Activated CD4-positive, alpha-beta T cell treated with anti-CD3 and anti-CD28 coated beads, Interleukin-2, amount 10 ng/mL, durations not matched to agents 24 days and 14 days (primary cell): ENCODE measurements at regions of chr6 and their contacts with region 1.

Region 1: DNA sequence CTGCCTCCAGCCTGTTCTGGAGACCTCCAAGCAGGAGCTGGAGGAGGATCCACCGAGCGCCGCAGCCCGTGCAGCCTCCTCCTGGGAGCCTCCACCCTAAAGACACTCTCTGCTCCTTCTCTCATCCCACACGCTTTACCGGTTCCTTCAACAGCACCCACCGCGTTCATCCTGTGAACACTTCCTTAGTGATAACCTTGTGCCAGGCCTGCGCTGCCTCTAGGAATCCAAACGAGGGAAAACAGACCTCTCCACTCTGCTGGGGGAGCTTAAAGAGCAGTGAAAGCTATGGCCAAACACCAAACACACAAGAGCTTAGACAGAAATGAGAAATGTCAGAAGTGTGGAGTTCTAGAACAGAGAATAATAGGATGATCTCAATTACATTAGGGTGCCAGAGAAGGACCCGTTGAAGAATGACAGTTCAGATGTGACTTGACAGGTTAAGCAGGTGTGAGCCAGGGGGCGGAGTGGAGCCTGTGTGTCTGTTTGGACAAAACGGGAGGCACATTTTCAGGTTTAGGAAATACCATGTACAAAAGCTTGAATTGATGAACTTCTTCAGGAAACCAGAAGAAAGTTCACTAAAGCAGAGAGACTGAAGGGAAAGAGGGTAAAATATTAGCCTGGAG is 28.5 kb upstream of the HLA-DRB5 start:
- DNase-seq: no peak
- H3K4me3 Mint-ChIP-seq: no peak overlapping the region
- H3K27ac Mint-ChIP-seq: no peak overlapping the region
- H3K4me1 Mint-ChIP-seq: no peaks in the 10 kb centered on the region
- H3K27me3 Mint-ChIP-seq: peaks cover 21% of the 10 kb centered on the region

Region 2: GRCh38 chr6:31541658-31542521 is 1016.7 kb before region 1 on chr6 and contains the start of gene DDX39B:
- intact Hi-C with region 1: no loop called
- DNase-seq: peak; percentile 98
- H3K4me3 Mint-ChIP-seq: peak within 1 kb of the TSS; percentile 81
- H3K27ac Mint-ChIP-seq: peak within 1 kb of the TSS; percentile 90
- H3K4me1 Mint-ChIP-seq: peaks cover 50% of the 10 kb centered on the region
- H3K27me3 Mint-ChIP-seq: no peaks in the 10 kb centered on the region
- total RNA-seq, gene DDX39B: 696 and 720 TPM in 2 replicates

Region 3: GRCh38 chr6:32522302-32523047 is 36.1 kb before region 1 on chr6:
- intact Hi-C with region 1: loop called (anchors 1 kb)
- DNase-seq: no peak
- H3K4me3 Mint-ChIP-seq: no peak overlapping the region
- H3K27ac Mint-ChIP-seq: no peak overlapping the region
- H3K4me1 Mint-ChIP-seq: no peaks in the 10 kb centered on the region
- H3K27me3 Mint-ChIP-seq: peaks cover 31% of the 10 kb centered on the region

Region 4: GRCh38 chr6:32581315-32582095 is 23.0 kb after region 1 on chr6:
- intact Hi-C with region 1: loop called (anchors 1 kb)
- DNase-seq: no peak
- H3K4me3 Mint-ChIP-seq: no peak overlapping the region
- H3K27ac Mint-ChIP-seq: no peak overlapping the region
- H3K4me1 Mint-ChIP-seq: peaks cover 20% of the 10 kb centered on the region
- H3K27me3 Mint-ChIP-seq: peaks cover 5% of the 10 kb centered on the region